Naive thymus-derived CD4-positive, alpha-beta T cell (primary cell): ENCODE measurements at regions of chr20 and their contacts with region 1.

Region 1: DNA sequence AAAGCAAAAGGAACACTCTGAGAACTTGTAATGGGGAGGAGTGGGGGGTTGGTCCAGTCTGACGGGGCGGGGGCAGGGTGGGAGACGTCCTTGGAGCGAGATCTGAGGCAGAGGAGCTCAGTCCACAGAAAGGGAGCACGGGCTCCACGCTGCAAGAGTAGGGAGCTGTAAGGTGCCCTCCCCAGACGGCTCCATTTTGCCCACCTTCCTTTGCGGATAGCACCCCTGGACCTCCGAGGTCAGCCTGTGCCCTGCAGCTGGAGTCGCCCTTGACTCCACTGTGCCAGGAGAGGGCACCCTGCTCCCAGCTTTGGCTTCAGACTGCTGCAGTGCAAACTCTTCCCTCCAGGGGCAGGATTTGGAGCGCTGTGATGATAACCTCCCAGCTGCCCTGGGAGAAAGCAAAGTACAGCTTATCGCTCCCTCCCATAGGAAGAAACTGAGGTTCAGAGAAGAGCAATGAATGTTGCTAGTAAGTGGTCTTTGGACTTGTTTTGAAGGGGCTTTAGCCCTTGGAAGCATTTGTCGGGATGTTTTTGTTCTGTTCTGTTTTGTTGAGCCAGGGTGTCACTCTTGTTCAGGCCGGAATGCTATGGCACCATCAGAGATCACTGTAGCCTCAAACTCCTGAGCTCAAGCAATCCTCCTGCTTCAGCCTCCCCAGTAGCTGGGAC is 9.5 kb upstream of the AHCY start:
- DNase-seq: peak; percentile 71 to 85 (median 82)
- ATAC-seq: peak; percentile 100
- H3K4me3 ChIP-seq: no peak overlapping the region
- H3K4me3 Mint-ChIP-seq: peak overlapping the region in 9 of 10 donors; percentile 20 to 58 (median 38)
- H3K27ac ChIP-seq: no peak overlapping the region
- H3K27ac Mint-ChIP-seq: peak overlapping the region in 1 of 9 donors; percentile 75
- H3K4me1 ChIP-seq: peaks cover 0 to 6% of the 10 kb centered on the region in 2 donors
- H3K4me1 Mint-ChIP-seq: peaks cover 0 to 14% (median 5%) of the 10 kb centered on the region in 7 donors
- H3K27me3 ChIP-seq: peaks cover 0 to 10% of the 10 kb centered on the region in 2 donors
- H3K27me3 Mint-ChIP-seq: peaks cover 0 to 27% (median 9%) of the 10 kb centered on the region in 5 donors

Region 2: DNA sequence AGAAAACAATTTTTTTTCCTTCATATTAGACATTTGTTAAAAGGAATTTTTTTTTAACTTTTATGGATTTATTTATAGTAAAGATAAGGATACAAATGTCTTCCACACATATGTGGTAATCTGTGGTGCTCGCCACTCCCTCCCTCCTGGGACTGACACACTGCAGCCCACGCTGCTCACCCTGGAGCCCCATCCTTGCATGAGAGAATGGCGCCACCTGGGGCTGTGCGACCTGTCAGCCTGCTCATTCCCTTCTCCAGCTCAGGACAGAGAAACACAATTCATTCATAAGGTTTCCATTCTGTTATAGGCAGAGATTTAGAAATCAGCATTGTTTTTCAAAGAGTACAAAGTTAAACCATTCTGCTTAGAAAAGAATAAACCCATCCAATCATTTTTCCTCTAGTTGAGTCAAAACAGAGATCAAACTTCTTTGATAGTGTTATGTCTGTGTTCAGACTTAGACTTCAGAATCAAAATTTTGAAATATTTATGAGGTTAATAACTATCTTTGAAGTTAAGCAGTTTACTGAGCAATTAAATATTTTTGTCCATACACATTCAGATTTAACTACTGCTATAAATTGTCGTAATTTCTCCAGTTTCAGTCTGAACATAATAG is 160.7 kb after region 1 on chr20:
- CTCF ChIA-PET with region 1: interaction called, 8 read pairs
- POLR2A ChIA-PET with region 1: no interaction called
- intact Hi-C with region 1: loop called (anchors 1 kb)
- DNase-seq: peak in 4 of 9 donors; percentile 8 to 33 (median 12)
- ATAC-seq: peak; percentile 57
- H3K4me3 ChIP-seq: no peak overlapping the region
- H3K4me3 Mint-ChIP-seq: no peak overlapping the region
- H3K27ac ChIP-seq: no peak overlapping the region
- H3K27ac Mint-ChIP-seq: no peak overlapping the region
- H3K4me1 ChIP-seq: no peaks in the 10 kb centered on the region
- H3K4me1 Mint-ChIP-seq: peaks cover 0 to 9% (median 5%) of the 10 kb centered on the region in 7 donors
- H3K27me3 ChIP-seq: no peaks in the 10 kb centered on the region
- H3K27me3 Mint-ChIP-seq: no peaks in the 10 kb centered on the region

Region 3: DNA sequence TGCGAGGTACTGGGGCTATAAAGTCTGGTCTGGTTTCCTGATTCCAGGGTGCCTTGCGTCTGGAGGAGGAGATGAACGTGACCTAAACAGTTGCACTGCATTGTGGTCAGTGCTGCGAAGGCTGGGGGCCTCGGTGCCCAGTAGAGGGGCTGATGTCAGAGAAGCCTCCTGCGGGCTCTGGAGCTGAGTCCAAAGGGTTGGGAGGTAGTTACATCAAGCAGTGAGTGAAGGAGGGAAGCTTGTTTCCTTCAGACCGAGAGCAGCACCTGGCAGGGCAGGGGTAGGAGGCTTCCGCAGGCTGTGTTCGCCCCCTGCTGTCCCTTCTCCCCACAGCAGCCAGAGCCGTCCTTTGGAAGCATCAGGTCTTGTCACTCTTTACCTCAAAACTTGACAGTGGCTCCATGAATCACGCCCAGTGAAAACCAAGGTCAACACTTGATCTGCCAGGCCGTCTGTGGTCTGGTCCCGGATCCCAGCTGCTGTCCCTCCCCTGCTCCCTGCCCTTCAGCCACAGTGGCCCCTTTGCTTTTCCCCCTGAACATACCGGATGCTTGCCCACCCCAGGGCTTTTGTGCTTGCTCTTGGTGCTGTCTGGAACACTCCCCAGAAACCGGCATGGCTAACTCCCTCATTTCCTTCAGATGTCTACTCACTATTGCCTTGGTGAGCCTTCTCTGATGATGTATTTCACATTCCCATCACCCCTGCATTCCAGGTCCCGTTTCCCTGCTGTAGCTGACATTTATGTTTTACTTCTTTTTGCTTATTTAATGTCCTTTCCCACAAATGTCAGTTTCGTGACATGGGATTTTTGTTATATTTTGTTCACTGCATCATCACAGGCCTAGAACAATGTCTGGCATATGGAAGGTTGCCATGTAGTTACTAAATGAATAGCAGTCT is 210.5 kb after region 1 on chr20:
- CTCF ChIA-PET with region 1: interaction called, 45 read pairs
- POLR2A ChIA-PET with region 1: interaction called, 3 read pairs
- intact Hi-C with region 1: loop called (anchors 1 kb)
- DNase-seq: peak; percentile 33 to 60 (median 43)
- ATAC-seq: peak; percentile 84
- H3K4me3 ChIP-seq: no peak overlapping the region
- H3K4me3 Mint-ChIP-seq: peak overlapping the region in 2 of 10 donors; percentile 1 to 76
- H3K27ac ChIP-seq: no peak overlapping the region
- H3K27ac Mint-ChIP-seq: peak overlapping the region in 5 of 9 donors; percentile 4 to 84 (median 58)
- H3K4me1 ChIP-seq: peaks cover 7 to 15% of the 10 kb centered on the region in 2 donors
- H3K4me1 Mint-ChIP-seq: peaks cover 24 to 69% (median 47%) of the 10 kb centered on the region in 7 donors
- H3K27me3 ChIP-seq: no peaks in the 10 kb centered on the region
- H3K27me3 Mint-ChIP-seq: no peaks in the 10 kb centered on the region

Region 4: DNA sequence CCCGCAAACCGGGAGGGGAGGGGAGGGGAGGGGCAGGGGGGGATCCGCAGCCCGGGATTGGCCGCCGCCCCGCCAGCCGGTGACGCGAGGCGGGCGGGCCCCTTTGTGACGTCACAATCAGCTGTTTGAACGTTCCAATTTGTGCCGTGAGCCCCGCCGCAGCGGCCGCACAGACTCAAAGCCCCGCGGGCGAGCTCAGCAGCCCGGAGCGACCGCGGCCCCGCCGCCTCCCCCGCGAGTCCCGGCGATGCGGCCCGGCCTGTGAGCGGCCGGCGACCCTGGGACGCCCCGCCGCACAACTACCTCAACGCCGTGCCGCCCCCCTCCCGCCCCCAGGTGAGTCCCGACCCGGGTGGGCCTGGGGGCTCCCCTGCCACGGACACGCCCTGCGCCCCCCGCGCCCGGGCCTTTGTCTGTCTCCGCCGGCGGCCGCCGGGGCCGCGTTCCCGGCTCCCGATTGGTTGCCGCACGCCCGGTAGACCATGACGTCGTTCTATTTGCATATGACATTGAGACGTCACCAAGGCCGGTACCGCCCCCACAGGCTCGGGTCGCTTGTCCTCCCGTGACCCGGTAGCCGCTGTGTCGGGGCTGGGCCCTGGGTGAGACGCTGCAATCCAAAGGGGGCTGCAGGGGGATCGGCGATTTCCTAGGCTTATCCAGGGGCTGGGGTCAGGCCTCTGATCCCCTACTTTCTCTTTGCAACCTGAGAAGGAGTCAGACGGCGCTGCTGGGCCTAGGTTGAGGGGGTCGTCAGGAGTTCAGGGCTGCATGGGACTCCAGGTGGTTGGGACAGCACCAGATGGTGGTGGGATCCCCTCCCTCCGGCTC is 391.7 kb after region 1 on chr20 and contains the start of gene TP53INP2:
- CTCF ChIA-PET with region 1: interaction called, 17 read pairs
- POLR2A ChIA-PET with region 1: no interaction called
- intact Hi-C with region 1: loop called (anchors 1 to 2 kb)
- DNase-seq: peak; percentile 82 to 93 (median 87)
- ATAC-seq: peak; percentile 78
- H3K4me3 ChIP-seq: peak within 1 kb of the TSS; percentile 59
- H3K4me3 Mint-ChIP-seq: peak within 1 kb of the TSS; percentile 91 to 98 (median 94)
- H3K27ac ChIP-seq: peak within 1 kb of the TSS; percentile 94
- H3K27ac Mint-ChIP-seq: peak within 1 kb of the TSS; percentile 79 to 100 (median 97)
- H3K4me1 ChIP-seq: peaks cover 6 to 7% of the 10 kb centered on the region in 2 donors
- H3K4me1 Mint-ChIP-seq: peaks cover 15 to 39% (median 25%) of the 10 kb centered on the region in 7 donors
- H3K27me3 ChIP-seq: no peaks in the 10 kb centered on the region
- H3K27me3 Mint-ChIP-seq: peaks cover 0 to 25% (median 6%) of the 10 kb centered on the region in 5 donors
- total RNA-seq, gene TP53INP2: 1.2 to 41.4 (median 1.5) TPM

Region 5: DNA sequence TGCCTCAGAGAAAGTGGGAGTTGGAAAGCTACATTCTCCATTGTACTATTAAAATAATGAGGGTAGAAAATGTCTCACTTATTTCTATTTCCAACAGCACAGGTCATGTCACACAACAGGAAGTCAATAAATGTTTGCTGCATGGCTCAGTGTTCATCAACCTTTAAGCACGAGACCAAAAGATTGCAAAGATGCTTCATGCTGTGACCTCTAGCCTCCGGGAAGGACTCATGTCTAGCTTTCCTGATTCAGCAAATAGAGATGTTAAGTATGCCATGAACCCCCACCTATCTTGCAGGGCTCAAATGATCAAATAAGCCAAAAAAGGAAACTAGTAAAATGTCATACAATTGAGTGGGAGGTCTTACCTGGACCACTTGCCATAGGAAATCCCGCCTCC is 455.4 kb after region 1 on chr20:
- CTCF ChIA-PET with region 1: interaction called, 56 read pairs
- POLR2A ChIA-PET with region 1: interaction called, 3 read pairs
- intact Hi-C with region 1: loop called (anchors 1 kb)
- DNase-seq: no peak
- ATAC-seq: no peak
- H3K4me3 ChIP-seq: no peak overlapping the region
- H3K4me3 Mint-ChIP-seq: no peak overlapping the region
- H3K27ac ChIP-seq: no peak overlapping the region
- H3K27ac Mint-ChIP-seq: no peak overlapping the region
- H3K4me1 ChIP-seq: no peaks in the 10 kb centered on the region
- H3K4me1 Mint-ChIP-seq: peaks cover 0 to 3% (median 0%) of the 10 kb centered on the region in 7 donors
- H3K27me3 ChIP-seq: no peaks in the 10 kb centered on the region
- H3K27me3 Mint-ChIP-seq: no peaks in the 10 kb centered on the region